Natural killer cell (primary cell): ENCODE measurements at regions of chr11 and their contacts with region 1.

Region 1: DNA sequence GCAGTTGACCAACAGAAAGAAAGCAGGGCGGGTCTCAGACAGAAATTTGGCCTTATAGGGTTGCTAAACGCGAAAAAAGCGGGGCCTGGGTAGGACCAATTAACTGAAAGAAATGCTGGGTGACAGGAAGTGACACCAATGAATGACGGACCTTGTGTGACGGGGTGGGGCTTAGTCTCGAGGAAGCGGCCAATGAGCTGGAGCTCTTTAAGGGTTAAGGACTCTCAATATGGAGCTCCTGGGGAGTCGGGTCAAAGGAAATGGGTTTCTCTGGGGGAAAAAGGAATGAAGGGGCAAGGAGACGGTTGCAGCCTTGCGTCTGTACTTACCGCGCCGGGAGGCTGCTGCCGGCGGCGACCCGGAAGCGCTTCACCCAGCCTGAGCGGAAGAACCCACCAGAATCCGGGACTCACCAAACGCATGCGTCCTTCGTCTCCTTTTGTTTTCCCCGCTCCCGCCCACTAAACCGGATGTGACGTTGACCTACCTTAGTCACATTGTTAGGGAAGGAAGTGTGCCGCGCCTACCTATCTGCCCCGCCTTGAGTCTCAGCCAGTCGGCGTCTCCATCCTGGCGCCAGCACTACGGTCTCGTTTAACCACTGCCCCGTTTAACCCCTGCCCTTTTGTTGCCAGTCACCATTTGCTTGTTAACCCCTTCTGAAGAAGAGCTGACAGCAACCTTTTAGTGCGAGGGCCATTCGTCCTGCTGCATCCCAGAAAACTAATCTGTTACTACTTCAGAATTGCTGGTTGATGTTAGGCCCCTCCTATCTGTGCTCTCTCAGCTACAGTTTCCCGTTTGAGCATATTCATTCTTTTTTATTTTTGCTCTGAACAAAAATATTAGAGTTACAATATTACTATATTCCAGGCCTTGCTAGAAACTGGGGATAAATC is at the start of gene ANAPC15:
- DNase-seq: peak; percentile 95 to 100
- ATAC-seq: peak; percentile 88 to 95 (median 88)
- H3K4me3 ChIP-seq: peak within 1 kb of the TSS; percentile 69
- H3K4me3 Mint-ChIP-seq: peak within 1 kb of the TSS; percentile 94
- H3K27ac ChIP-seq: peak within 1 kb of the TSS; percentile 90
- H3K27ac Mint-ChIP-seq: peak within 1 kb of the TSS; percentile 95 to 96
- H3K4me1 ChIP-seq: peaks cover 19% of the 10 kb centered on the region
- H3K4me1 Mint-ChIP-seq: peaks cover 20 to 24% of the 10 kb centered on the region in 2 donors
- H3K27me3 ChIP-seq: no peaks in the 10 kb centered on the region
- H3K27me3 Mint-ChIP-seq: peaks cover 7 to 23% of the 10 kb centered on the region in 2 donors
- CTCF ChIP-seq: no peak
- total RNA-seq, gene ANAPC15: 22.0 to 38.3 (median 29.7) TPM

Region 2: DNA sequence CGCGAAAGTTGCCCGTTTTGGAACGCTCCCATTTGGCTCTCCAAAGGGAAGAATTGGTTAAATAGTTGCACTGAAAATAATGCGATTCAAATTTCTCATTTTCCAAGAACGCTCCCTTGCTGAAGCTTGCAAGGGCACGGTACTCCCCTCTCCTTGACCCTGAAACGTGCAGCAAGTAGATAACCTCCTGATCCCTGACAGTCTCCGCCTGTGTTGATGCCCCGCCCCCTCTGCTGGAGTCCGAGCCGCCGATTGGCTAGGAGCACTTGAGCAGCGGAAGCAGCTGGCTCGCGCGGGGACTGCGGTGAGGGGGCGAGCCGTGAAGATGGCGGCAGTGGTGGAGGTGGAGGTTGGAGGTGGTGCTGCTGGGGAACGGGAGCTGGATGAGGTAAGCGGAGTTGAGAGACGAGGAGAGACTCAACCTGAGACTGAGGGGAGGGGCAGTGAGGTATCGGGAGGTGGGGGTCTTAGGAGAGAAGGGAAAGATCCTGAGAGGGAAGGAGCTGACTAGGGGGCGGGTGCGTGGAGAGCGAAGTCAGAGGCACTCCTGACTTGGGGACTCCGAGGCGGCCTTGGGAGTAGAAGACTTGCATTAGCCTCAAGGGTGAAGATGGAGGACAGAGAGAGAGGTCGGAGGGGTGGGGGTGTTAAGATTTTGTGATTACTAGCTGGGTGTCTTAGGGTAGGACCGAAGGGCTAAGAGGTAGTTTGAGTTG is 183.7 kb before region 1 on chr11 and contains the start of gene RNF121:
- intact Hi-C with region 1: loop called (anchors 1 kb)
- DNase-seq: peak; percentile 96 to 97
- ATAC-seq: peak; percentile 91 to 96 (median 93)
- H3K4me3 ChIP-seq: peak within 1 kb of the TSS; percentile 73
- H3K4me3 Mint-ChIP-seq: peak within 1 kb of the TSS; percentile 99
- H3K27ac ChIP-seq: peak within 1 kb of the TSS; percentile 83
- H3K27ac Mint-ChIP-seq: peak within 1 kb of the TSS; percentile 92 to 98
- H3K4me1 ChIP-seq: peaks cover 18% of the 10 kb centered on the region
- H3K4me1 Mint-ChIP-seq: peaks cover 37 to 47% of the 10 kb centered on the region in 2 donors
- H3K27me3 ChIP-seq: no peaks in the 10 kb centered on the region
- H3K27me3 Mint-ChIP-seq: no peaks in the 10 kb centered on the region
- CTCF ChIP-seq: no peak
- total RNA-seq, gene RNF121: 22.7 to 28.2 (median 22.9) TPM

Region 3: GRCh38 chr11:72040726-72041441 is 71.7 kb before region 1 on chr11:
- intact Hi-C with region 1: loop called (anchors 2 kb)
- DNase-seq: peak; percentile 61 to 92
- ATAC-seq: peak; percentile 46 to 69 (median 51)
- H3K4me3 ChIP-seq: peak overlapping the region; percentile 87
- H3K4me3 Mint-ChIP-seq: no peak overlapping the region
- H3K27ac ChIP-seq: peak overlapping the region; percentile 88
- H3K27ac Mint-ChIP-seq: no peak overlapping the region
- H3K4me1 ChIP-seq: peaks cover 60% of the 10 kb centered on the region
- H3K4me1 Mint-ChIP-seq: peaks cover 12 to 35% of the 10 kb centered on the region in 2 donors
- H3K27me3 ChIP-seq: no peaks in the 10 kb centered on the region
- H3K27me3 Mint-ChIP-seq: no peaks in the 10 kb centered on the region
- CTCF ChIP-seq: no peak

Region 4: GRCh38 chr11:72072348-72072747 is 40.2 kb before region 1 on chr11:
- intact Hi-C with region 1: no loop called
- DNase-seq: no peak
- ATAC-seq: peak; percentile 40 to 58 (median 45)
- H3K4me3 ChIP-seq: no peak overlapping the region
- H3K4me3 Mint-ChIP-seq: no peak overlapping the region
- H3K27ac ChIP-seq: peak overlapping the region; percentile 2
- H3K27ac Mint-ChIP-seq: peak overlapping the region; percentile 86 to 96
- H3K4me1 ChIP-seq: peaks cover 34% of the 10 kb centered on the region
- H3K4me1 Mint-ChIP-seq: peaks cover 60 to 61% of the 10 kb centered on the region in 2 donors
- H3K27me3 ChIP-seq: no peaks in the 10 kb centered on the region
- H3K27me3 Mint-ChIP-seq: no peaks in the 10 kb centered on the region
- CTCF ChIP-seq: no peak